Natural killer cell (primary cell): ENCODE measurements at regions of chr2 and their contacts with region 1.

Region 1: DNA sequence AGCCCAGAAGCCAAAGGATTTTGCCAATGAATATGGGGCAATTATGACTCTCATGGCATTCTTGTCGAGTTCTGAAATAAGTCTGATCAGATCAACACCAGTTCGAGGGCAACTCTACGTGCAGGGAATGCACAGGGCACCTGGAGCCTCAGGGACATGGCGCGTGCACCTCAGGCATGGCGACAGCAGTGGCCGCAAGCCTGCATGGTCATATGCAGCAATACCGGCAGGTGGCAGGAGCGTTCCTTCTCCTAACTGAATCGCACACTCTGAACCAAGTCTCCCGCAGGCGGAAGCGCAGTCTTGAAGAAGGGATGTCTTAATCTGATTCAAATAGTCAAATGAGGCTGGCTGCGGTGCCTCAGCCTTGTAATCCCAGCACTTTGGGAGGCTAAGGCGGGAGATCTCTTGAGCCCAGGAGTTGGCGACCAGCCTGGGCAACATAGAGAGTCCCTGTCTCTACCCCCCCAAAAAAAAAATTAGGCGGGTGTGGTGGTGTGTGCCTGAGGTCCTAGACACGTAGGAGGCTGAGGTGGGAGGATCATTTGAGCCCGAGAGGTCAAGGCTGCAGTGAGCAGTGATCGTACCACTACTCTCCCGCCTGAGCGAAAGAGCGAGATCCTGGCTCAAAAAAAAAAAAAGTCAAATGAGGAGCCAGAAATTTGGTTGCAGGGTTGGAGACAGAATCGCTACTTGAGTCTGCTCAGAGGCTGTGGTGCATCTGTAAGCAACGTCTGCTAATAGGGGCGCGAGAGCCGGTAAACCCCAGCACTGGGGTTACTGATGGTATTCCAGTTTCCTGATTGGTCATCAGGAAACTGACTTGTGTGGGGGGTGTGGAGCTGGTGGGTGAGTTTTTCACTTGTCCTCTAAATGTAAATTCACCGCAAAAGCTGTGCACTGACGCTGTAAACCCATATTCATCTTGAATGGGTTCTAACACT is 28.8 kb downstream of the FHL2 start:
- DNase-seq: peak; percentile 75 to 92
- ATAC-seq: peak; percentile 92 to 99 (median 99)
- H3K4me3 ChIP-seq: no peak overlapping the region
- H3K4me3 Mint-ChIP-seq: no peak overlapping the region
- H3K27ac ChIP-seq: no peak overlapping the region
- H3K27ac Mint-ChIP-seq: peak overlapping the region in 1 of 2 donors; percentile 45
- H3K4me1 ChIP-seq: peaks cover 13% of the 10 kb centered on the region
- H3K4me1 Mint-ChIP-seq: peaks cover 8 to 16% of the 10 kb centered on the region in 2 donors
- H3K27me3 ChIP-seq: no peaks in the 10 kb centered on the region
- H3K27me3 Mint-ChIP-seq: peaks cover 15 to 21% of the 10 kb centered on the region in 2 donors
- CTCF ChIP-seq: peak; percentile 89

Region 2: GRCh38 chr2:105460048-105460732 is 90.2 kb after region 1 on chr2:
- intact Hi-C with region 1: no loop called
- DNase-seq: no peak
- ATAC-seq: no peak
- H3K4me3 ChIP-seq: no peak overlapping the region
- H3K4me3 Mint-ChIP-seq: no peak overlapping the region
- H3K27ac ChIP-seq: no peak overlapping the region
- H3K27ac Mint-ChIP-seq: no peak overlapping the region
- H3K4me1 ChIP-seq: no peaks in the 10 kb centered on the region
- H3K4me1 Mint-ChIP-seq: no peaks in the 10 kb centered on the region
- H3K27me3 ChIP-seq: no peaks in the 10 kb centered on the region
- H3K27me3 Mint-ChIP-seq: peaks cover 8 to 15% of the 10 kb centered on the region in 2 donors
- CTCF ChIP-seq: no peak

Region 3: DNA sequence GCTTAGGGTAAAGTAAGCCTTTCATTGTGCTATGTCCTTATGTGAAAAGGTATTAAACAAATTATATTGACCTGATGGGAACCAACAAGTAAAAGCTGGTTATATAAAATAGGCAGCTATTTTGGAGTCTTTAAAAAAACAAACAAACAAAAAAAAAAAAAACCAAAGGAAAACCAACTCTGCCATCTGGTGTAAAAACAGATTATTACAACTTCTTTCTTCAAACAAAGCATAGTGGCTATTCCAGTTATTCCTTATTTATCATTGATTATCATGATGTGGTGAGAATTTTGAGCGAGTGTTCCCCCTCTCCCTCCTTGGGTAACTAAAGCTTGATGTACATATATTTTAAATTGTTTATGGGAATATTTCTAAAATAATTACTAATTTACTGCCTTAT is 151.2 kb after region 1 on chr2:
- intact Hi-C with region 1: loop called (anchors 1 kb)
- DNase-seq: peak in 1 of 2 donors; percentile 56
- ATAC-seq: no peak
- H3K4me3 ChIP-seq: no peak overlapping the region
- H3K4me3 Mint-ChIP-seq: no peak overlapping the region
- H3K27ac ChIP-seq: no peak overlapping the region
- H3K27ac Mint-ChIP-seq: no peak overlapping the region
- H3K4me1 ChIP-seq: no peaks in the 10 kb centered on the region
- H3K4me1 Mint-ChIP-seq: no peaks in the 10 kb centered on the region
- H3K27me3 ChIP-seq: no peaks in the 10 kb centered on the region
- H3K27me3 Mint-ChIP-seq: peaks cover 0 to 3% of the 10 kb centered on the region in 2 donors
- CTCF ChIP-seq: peak; percentile 45

Region 4: DNA sequence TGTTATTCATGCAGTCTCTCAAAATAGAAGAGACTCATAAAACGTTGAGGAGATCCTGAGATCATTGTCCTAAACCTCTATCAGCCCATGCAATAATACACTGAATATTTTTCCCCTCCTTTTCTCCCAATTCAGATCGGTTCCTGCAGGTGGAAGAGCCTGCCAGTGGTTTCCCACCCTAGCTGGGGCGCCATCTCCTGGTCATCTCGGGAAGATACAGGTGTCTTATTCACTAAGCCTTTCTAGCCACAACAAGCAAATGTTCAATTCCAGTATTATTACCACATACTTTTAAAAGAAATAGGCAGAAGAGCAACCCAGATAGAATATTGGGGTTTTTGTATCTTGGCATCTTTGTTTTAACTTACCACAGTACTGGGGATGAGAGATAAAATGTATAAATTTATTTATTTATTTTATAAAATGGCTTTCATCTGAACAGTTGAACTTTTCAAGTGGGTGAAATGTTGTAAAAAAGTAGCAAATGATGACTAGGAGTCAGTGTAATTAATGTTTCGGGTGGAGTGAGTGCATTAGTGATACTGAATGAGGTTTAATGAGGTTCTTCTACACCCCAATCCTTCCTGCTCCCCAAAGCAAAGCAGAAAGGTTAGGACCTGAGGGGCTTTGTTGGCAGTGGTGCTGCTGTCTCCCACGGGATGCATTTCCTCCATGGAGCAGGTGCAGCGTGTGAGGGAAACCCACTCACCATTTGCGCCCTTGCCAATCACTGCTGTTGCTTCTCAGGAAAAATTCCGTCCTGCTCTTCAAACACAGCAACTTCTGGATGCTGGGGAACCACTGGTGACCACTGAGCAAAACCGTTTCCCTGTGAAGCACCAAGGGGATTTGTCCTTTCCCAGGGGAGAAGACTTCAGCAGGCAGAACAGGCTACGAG is 176.0 kb after region 1 on chr2:
- intact Hi-C with region 1: loop called (anchors 1 kb)
- DNase-seq: peak; percentile 46 to 80
- ATAC-seq: peak; percentile 55 to 82 (median 70)
- H3K4me3 ChIP-seq: no peak overlapping the region
- H3K4me3 Mint-ChIP-seq: no peak overlapping the region
- H3K27ac ChIP-seq: no peak overlapping the region
- H3K27ac Mint-ChIP-seq: no peak overlapping the region
- H3K4me1 ChIP-seq: no peaks in the 10 kb centered on the region
- H3K4me1 Mint-ChIP-seq: peaks cover 0 to 4% of the 10 kb centered on the region in 2 donors
- H3K27me3 ChIP-seq: no peaks in the 10 kb centered on the region
- H3K27me3 Mint-ChIP-seq: peaks cover 10 to 13% of the 10 kb centered on the region in 2 donors
- CTCF ChIP-seq: peak; percentile 83